MCF 10A (cell line): ENCODE measurements at regions of chr2 and their contacts with region 1.

Region 1: DNA sequence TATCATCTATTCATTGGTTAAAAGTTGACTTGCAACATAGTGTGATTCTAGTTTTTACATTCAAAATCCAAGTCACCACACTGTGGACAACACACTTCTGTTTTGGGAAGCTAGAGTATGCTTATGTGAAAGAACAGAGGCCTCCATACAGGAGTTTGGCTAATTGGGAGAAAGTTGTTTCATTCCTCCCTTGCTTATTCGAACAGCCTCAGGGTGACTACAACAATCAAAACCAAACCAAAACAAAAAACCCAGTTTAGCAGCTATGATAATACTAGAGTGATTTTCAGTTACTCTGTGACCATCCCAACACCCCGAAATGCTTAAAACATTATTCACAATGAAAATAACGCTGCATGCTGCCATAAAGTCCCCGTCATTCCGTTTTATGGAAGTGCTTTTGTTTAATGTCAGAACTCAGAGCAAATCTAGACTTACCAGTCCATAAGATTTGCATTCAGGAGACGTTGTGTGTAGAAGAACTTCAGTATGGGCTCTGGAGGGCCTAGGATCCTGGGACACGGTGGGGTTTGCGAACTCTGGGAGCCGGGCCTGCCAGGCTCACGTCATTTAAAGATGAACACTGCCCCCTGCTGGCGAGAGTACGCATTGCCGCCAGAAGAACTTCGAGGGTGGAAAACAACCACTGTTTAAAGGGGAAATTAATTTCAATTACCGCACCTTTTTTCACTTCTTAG is 111.4 kb downstream of the FTCDNL1 start:
- DNase-seq: peak; percentile 69
- H3K4me3 Mint-ChIP-seq: no peak overlapping the region
- H3K27ac Mint-ChIP-seq: no peak overlapping the region
- H3K4me1 Mint-ChIP-seq: peaks cover 12% of the 10 kb centered on the region
- H3K27me3 Mint-ChIP-seq: peaks cover 44% of the 10 kb centered on the region
- CTCF ChIP-seq: peak; percentile 90

Region 2: GRCh38 chr2:198657512-198658121 is 1081.9 kb before region 1 on chr2:
- CTCF ChIA-PET with region 1: interaction called, 5 read pairs
- POLR2A ChIA-PET with region 1: no interaction called
- intact Hi-C with region 1: loop called (anchors 2 kb)
- DNase-seq: peak; percentile 38
- H3K4me3 Mint-ChIP-seq: no peak overlapping the region
- H3K27ac Mint-ChIP-seq: no peak overlapping the region
- H3K4me1 Mint-ChIP-seq: no peaks in the 10 kb centered on the region
- H3K27me3 Mint-ChIP-seq: peaks cover 71% of the 10 kb centered on the region
- CTCF ChIP-seq: peak; percentile 49

Region 3: DNA sequence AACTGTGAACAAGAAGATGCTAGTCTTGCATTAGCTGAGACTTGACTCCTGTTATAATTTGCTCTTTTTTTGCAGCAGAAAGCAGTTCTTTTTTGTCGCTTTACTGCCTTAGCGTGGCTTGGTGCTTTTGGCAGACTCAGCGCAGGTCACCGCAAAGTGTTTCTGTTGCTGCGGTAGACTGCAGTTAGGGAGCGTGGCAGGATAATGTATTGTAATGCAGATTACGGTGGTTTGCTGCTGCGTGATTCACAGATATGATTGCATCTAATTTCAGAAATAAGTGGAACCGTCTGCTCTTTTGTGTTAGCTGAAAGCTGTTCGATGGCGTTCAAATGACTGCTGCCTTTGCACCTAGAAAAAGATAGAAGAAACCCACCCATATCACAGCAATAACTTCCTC is 150.3 kb before region 1 on chr2:
- CTCF ChIA-PET with region 1: no interaction called
- POLR2A ChIA-PET with region 1: no interaction called
- intact Hi-C with region 1: no loop called
- DNase-seq: no peak
- H3K4me3 Mint-ChIP-seq: no peak overlapping the region
- H3K27ac Mint-ChIP-seq: no peak overlapping the region
- H3K4me1 Mint-ChIP-seq: no peaks in the 10 kb centered on the region
- H3K27me3 Mint-ChIP-seq: peaks cover 67% of the 10 kb centered on the region
- CTCF ChIP-seq: no peak

Region 4: GRCh38 chr2:199692489-199692888 is 47.1 kb before region 1 on chr2:
- CTCF ChIA-PET with region 1: interaction called, 19 read pairs
- POLR2A ChIA-PET with region 1: no interaction called
- intact Hi-C with region 1: no loop called
- DNase-seq: peak; percentile 15
- H3K4me3 Mint-ChIP-seq: no peak overlapping the region
- H3K27ac Mint-ChIP-seq: no peak overlapping the region
- H3K4me1 Mint-ChIP-seq: no peaks in the 10 kb centered on the region
- H3K27me3 Mint-ChIP-seq: peaks cover 5% of the 10 kb centered on the region
- CTCF ChIP-seq: no peak

Region 5: GRCh38 chr2:199713746-199714145 is 25.8 kb before region 1 on chr2:
- CTCF ChIA-PET with region 1: interaction called, 15 read pairs
- POLR2A ChIA-PET with region 1: interaction called, 4 read pairs
- intact Hi-C with region 1: no loop called
- DNase-seq: no peak
- H3K4me3 Mint-ChIP-seq: no peak overlapping the region
- H3K27ac Mint-ChIP-seq: no peak overlapping the region
- H3K4me1 Mint-ChIP-seq: peaks cover 10% of the 10 kb centered on the region
- H3K27me3 Mint-ChIP-seq: peaks cover 34% of the 10 kb centered on the region
- CTCF ChIP-seq: no peak

Region 6: DNA sequence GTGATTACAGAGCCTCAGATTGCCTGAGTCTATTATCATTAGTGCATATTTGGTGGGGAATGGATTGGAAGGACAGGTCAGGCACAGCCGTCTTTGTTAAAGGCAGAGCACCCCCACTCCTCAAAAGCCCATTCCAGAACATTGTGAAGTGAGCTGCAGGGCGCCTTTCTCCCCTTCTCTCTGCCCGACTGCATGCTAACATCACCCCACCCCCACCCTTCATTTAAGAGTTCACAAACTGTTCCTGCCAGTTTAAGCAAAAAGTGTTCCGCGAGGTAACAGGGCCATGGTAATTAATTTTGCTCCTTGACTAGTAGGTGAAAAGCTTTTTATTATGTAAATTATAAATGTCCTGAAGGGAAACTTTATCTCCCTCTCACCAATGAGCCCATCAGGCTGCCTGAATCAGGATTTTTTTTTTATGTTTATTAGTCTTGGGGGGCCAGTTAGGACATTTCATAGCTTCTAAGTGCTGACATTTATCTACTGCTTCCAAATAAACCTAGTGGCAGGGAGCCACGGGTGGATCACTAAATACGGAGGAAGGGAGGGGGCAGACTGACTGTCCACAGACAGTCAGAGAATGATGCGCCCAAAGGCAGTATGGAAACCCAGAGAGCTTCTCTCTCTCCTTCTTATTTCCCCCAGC is 12.0 kb after region 1 on chr2:
- CTCF ChIA-PET with region 1: interaction called, 27 read pairs
- POLR2A ChIA-PET with region 1: no interaction called
- intact Hi-C with region 1: no loop called
- DNase-seq: no peak
- H3K4me3 Mint-ChIP-seq: no peak overlapping the region
- H3K27ac Mint-ChIP-seq: no peak overlapping the region
- H3K4me1 Mint-ChIP-seq: no peaks in the 10 kb centered on the region
- H3K27me3 Mint-ChIP-seq: peaks cover 64% of the 10 kb centered on the region
- CTCF ChIP-seq: no peak

Region 7: GRCh38 chr2:199764273-199764800 is 24.8 kb after region 1 on chr2:
- CTCF ChIA-PET with region 1: interaction called, 13 read pairs
- POLR2A ChIA-PET with region 1: no interaction called
- intact Hi-C with region 1: no loop called
- DNase-seq: no peak
- H3K4me3 Mint-ChIP-seq: no peak overlapping the region
- H3K27ac Mint-ChIP-seq: no peak overlapping the region
- H3K4me1 Mint-ChIP-seq: no peaks in the 10 kb centered on the region
- H3K27me3 Mint-ChIP-seq: peaks cover 13% of the 10 kb centered on the region
- CTCF ChIP-seq: no peak